ENCODE measurements at regions of chr12 and their contacts with region 1.

Region 1: DNA sequence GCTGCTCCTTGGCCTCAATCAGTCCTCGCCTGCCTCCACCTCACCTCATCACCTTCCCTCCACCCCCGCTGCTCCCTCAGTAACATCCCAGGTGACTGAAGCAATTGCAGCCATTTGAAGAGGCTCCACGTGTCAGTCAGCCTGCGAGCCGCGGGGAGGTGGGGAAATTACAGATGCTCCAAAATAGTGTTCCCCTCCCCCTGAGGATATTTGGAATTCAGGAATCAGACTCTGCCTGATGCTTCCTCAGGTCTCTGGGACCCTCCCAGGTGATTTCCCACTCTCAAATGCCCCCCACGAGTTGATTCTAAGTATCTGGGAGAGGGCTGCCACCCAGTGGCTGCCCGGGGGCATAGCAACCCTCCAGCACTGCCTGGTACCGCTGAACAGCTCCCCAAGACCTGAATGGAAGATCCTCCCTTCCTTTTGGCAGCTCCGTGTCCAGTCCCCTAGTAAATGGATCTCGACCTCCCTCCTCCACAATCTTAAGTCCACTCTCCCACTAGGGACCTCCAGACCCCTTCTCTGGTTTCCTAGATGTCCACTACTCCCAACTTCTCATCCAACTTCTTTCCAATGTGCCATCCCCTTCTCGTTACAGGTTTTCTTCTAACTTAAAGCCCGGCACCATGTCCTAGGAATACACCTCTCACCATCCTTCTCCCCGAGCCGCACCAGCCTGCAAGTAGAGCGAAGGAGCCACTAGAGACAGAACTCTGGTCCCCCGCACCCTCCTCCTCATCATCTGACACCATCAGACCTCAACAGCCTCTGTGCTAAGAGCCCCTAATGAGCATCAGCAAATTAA is 1.4 kb upstream of the ASIC1 start:
- DNase-seq: peak; percentile 83
- CTCF ChIP-seq: peak; percentile 95

Region 2: GRCh38 chr12:49945394-49946080 is 110.5 kb before region 1 on chr12:
- CTCF ChIA-PET with region 1: interaction called, 13 read pairs
- POLR2A ChIA-PET with region 1: no interaction called
- DNase-seq: peak; percentile 92
- CTCF ChIP-seq: peak; percentile 90

Region 3: GRCh38 chr12:49959570-49960465 is 96.2 kb before region 1 on chr12:
- CTCF ChIA-PET with region 1: interaction called, 161 read pairs
- POLR2A ChIA-PET with region 1: no interaction called
- DNase-seq: no peak
- CTCF ChIP-seq: no peak

Region 4: GRCh38 chr12:50006789-50007436 is 49.1 kb before region 1 on chr12:
- CTCF ChIA-PET with region 1: interaction called, 28 read pairs
- POLR2A ChIA-PET with region 1: no interaction called
- DNase-seq: no peak
- CTCF ChIP-seq: no peak

Region 5: GRCh38 chr12:50038336-50038735 is 17.7 kb before region 1 on chr12:
- CTCF ChIA-PET with region 1: interaction called, 125 read pairs
- POLR2A ChIA-PET with region 1: no interaction called
- DNase-seq: no peak
- CTCF ChIP-seq: no peak

Region 6: GRCh38 chr12:50043854-50044253 is 12.2 kb before region 1 on chr12:
- CTCF ChIA-PET with region 1: interaction called, 125 read pairs
- POLR2A ChIA-PET with region 1: no interaction called
- DNase-seq: no peak
- CTCF ChIP-seq: no peak